ENCODE measurements at regions of chr17 and their contacts with region 1.

Region 1: GRCh38 chr17:79810130-79811010 is 13.5 kb upstream of the CBX8 start:
- DNase-seq: peak; percentile 90 to 92
- ATAC-seq: peak; percentile 55 to 80
- H3K4me3 ChIP-seq: peak overlapping the region; percentile 51
- H3K27ac ChIP-seq: peak overlapping the region; percentile 95 to 99
- H3K4me1 ChIP-seq: peaks cover 40% of the 10 kb centered on the region
- CTCF ChIP-seq: no peak
- EP300 ChIP-seq: no peak
- POLR2A ChIP-seq: peak; percentile 33; the same call in 1 of the 2 replicates
- RAD21 ChIP-seq: no peak

Region 2: DNA sequence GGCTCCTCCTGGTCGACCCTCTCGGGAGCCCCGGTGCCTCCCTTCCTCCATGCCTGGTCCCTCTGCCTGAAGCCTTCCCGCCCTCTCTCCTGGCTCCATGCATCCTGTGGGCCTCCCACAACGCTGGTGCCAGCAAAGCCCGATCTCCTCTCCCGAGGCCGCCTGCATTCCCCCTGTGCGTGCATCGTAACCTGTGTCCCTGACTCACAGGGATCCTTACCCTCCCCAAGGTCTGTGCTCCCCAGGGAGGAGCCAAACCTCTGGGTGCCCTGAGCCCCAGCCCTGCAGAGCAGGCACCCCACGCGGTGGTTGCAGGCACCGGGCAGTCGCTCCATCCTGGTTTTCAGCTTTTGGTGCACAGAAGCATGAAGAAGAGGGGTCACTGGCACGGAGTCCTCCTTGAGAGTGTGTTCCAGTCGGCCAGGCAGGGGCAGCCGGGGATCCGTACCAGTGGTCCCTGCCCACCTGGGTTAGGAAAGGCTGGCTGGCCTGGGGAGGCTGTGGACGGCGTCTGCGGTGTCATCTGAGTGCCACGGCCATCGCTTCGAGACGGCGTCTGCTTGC is 81.4 kb before region 1 on chr17:
- CTCF ChIA-PET with region 1: no interaction called
- POLR2A ChIA-PET with region 1: no interaction called
- DNase-seq: no peak
- ATAC-seq: peak; percentile 48 to 72
- H3K4me3 ChIP-seq: no peak overlapping the region
- H3K27ac ChIP-seq: peak overlapping the region; percentile 64 to 74; a peak in 5 of 6 replicates
- H3K4me1 ChIP-seq: no peaks in the 10 kb centered on the region; the same call in 2 of the 3 replicates
- CTCF ChIP-seq: no peak
- EP300 ChIP-seq: no peak
- POLR2A ChIP-seq: no peak
- RAD21 ChIP-seq: no peak

Region 3: GRCh38 chr17:79777894-79778503 is 32.4 kb before region 1 on chr17 and contains the start of gene CBX2:
- CTCF ChIA-PET with region 1: interaction called, 11 read pairs
- POLR2A ChIA-PET with region 1: no interaction called
- DNase-seq: peak; percentile 75 to 92
- ATAC-seq: peak; percentile 64 to 72
- H3K4me3 ChIP-seq: peak within 1 kb of the TSS; percentile 93
- H3K27ac ChIP-seq: peak within 1 kb of the TSS; percentile 91 to 98
- H3K4me1 ChIP-seq: peaks cover 21% of the 10 kb centered on the region
- CTCF ChIP-seq: no peak
- EP300 ChIP-seq: no peak
- POLR2A ChIP-seq: peak; percentile 93
- RAD21 ChIP-seq: no peak
- polyA plus RNA-seq, gene CBX2: 7.4 and 8.2 TPM in 2 replicates

Region 4: GRCh38 chr17:79844869-79845600 is 34.7 kb after region 1 on chr17:
- CTCF ChIA-PET with region 1: interaction called, 238 read pairs
- POLR2A ChIA-PET with region 1: interaction called, 84 read pairs
- DNase-seq: peak; percentile 58 to 92
- ATAC-seq: peak; percentile 66 to 83
- H3K4me3 ChIP-seq: peak overlapping the region; percentile 53
- H3K27ac ChIP-seq: peak overlapping the region; percentile 94 to 98
- H3K4me1 ChIP-seq: peaks cover 46% of the 10 kb centered on the region
- CTCF ChIP-seq: peak; percentile 81
- EP300 ChIP-seq: no peak
- POLR2A ChIP-seq: no peak
- RAD21 ChIP-seq: peak; percentile 49 to 68

Region 5: DNA sequence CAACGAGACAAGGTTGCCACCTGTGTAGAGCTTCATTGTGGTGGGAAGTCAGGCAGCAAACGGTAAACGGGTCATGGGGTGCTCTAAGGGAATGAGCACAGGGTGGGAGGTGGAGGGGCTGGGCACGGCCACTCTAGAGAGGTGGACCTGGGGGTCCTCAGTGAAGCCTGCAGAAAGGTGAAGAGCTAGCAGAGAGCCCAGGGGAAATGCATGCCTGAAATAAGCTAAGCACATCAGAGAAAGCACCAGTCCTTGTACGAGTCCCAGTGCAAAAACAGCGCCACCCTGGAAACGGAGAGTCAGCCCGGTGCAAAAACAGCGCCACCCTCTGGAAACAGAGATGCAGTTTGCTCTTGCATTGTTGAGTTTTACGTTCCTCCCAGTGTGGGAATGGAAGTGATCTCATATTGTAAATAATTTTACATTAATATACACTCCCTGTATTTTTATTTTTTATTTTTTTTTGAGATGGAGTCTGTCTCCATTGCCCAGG is 160.3 kb after region 1 on chr17:
- CTCF ChIA-PET with region 1: interaction called, 12 read pairs
- POLR2A ChIA-PET with region 1: no interaction called
- DNase-seq: peak in 1 of 2 experiments; percentile 75
- ATAC-seq: peak in 1 of 2 experiments; percentile 64; a peak in 3 of 6 replicates
- H3K4me3 ChIP-seq: no peak overlapping the region
- H3K27ac ChIP-seq: no peak overlapping the region
- H3K4me1 ChIP-seq: no peaks in the 10 kb centered on the region
- CTCF ChIP-seq: peak; percentile 63
- EP300 ChIP-seq: no peak
- POLR2A ChIP-seq: no peak
- RAD21 ChIP-seq: peak; percentile 57 to 68

Region 6: DNA sequence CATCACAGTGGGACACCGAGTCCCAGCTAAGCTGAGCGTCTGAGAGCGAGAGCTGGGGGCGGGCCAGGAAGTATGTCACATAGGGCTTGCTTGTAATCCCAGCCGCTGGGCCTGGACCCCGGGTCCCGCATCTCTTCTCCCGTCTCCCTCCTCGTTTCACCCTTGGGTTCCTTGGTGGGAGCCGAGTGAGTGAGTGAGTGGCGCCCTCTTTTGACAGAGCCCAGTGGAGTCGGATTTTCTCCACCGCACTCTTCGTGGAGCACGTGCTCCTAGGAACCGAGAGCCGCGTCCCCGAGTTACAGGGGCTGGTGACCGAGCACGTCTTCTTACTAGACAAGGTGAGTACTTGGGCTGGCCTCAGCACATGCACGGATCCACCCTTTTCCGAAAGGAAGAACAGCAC is 553.8 kb after region 1 on chr17:
- CTCF ChIA-PET with region 1: no interaction called
- POLR2A ChIA-PET with region 1: no interaction called
- DNase-seq: peak; percentile 37 to 38
- ATAC-seq: peak; percentile 31 to 70; a peak in 4 of 6 replicates
- H3K4me3 ChIP-seq: no peak overlapping the region
- H3K27ac ChIP-seq: no peak overlapping the region
- H3K4me1 ChIP-seq: no peaks in the 10 kb centered on the region
- CTCF ChIP-seq: peak; percentile 43
- EP300 ChIP-seq: no peak
- POLR2A ChIP-seq: no peak
- RAD21 ChIP-seq: peak; percentile 45 to 67; a peak in 4 of 5 replicates

Measured in A549 (cell line).